ENCODE measurements at regions of chr12 and their contacts with region 1.

Region 1: DNA sequence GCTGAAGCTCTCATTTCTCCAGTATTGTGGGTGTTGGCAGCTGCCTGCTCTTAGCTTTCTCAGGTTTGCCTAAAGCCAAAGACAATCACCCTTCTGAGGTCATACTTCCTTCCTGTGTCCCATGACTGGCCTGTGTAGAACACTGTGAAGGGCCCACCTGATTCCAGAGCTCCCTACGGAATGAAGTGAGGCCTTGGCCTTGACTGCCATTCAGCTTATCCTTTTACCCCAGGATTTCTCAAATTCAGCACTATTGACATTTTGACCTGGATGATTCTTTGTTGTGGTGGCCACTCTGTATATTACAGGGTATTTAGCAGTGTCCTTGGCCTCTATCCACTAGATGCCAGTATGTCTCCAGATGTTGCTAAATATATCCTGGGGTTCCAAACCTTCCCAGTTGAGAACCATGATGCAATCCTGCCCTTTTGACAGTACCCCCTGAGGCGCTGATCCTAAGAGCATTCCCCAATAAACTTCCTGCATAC is 112.3 kb upstream of the KRR1 start:
- DNase-seq: peak; percentile 53
- H3K4me3 ChIP-seq: no peak overlapping the region
- H3K27ac ChIP-seq: peak overlapping the region; percentile 18
- H3K4me1 ChIP-seq: peaks cover 9% of the 10 kb centered on the region
- H3K27me3 ChIP-seq: no peaks in the 10 kb centered on the region
- CTCF ChIP-seq: peak; percentile 30 to 60

Region 2: GRCh38 chr12:75568393-75568792 is 55.3 kb before region 1 on chr12:
- CTCF ChIA-PET with region 1: no interaction called
- dilution Hi-C with region 1: loop called (anchors 5 kb)
- in situ Hi-C with region 1: no loop called
- intact Hi-C with region 1: no loop called
- DNase-seq: peak; percentile 57
- H3K4me3 ChIP-seq: no peak overlapping the region
- H3K27ac ChIP-seq: no peak overlapping the region
- H3K4me1 ChIP-seq: peaks cover 21% of the 10 kb centered on the region
- H3K27me3 ChIP-seq: no peaks in the 10 kb centered on the region
- CTCF ChIP-seq: no peak

Region 3: DNA sequence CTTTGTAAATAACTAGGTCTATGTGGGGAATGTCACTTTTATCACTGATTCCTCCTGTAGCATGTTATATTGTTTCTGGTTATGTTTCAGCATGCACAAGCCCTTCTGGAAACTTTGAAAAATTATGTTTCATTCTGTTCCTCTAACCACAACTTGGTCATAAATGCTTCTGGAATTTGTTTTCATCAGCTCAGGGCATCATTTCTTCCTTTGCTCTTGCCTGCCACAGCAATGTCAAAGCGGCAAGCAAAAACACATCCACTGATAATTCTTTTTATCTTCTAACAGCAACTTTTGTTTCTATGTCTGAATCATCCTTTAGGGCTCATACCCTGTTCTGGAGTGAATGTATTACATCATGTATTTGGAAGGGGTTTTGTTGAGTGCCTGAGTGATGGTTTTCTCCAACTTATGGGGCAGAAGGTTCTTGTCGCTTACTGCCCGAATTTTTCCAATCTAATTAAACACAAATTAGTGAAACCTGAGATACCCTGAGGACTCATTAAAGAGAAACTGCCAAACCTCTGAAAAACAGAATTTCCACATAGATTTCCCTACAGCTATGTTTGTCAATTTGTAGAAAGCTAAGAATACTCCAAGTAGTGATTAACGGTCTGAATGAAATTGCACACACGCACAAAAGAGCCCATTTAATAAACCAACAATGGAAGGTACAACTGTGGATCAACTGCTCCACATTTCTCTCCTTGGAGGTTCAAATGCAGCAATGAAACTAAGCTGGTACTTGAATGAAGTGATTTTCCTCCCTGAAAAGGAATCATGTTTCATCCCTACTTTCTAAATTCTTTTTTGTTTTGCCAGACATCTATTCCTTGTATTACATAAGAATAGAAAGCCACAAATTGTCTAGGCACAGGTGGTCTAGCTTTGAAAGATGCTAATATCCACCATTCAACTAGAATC is 61.3 kb after region 1 on chr12:
- CTCF ChIA-PET with region 1: no interaction called
- dilution Hi-C with region 1: no loop called
- in situ Hi-C with region 1: no loop called
- intact Hi-C with region 1: loop called (anchors 2 kb)
- DNase-seq: peak; percentile 97
- H3K4me3 ChIP-seq: no peak overlapping the region
- H3K27ac ChIP-seq: peak overlapping the region; percentile 92
- H3K4me1 ChIP-seq: peaks cover 25% of the 10 kb centered on the region
- H3K27me3 ChIP-seq: no peaks in the 10 kb centered on the region
- CTCF ChIP-seq: no peak

Region 4: DNA sequence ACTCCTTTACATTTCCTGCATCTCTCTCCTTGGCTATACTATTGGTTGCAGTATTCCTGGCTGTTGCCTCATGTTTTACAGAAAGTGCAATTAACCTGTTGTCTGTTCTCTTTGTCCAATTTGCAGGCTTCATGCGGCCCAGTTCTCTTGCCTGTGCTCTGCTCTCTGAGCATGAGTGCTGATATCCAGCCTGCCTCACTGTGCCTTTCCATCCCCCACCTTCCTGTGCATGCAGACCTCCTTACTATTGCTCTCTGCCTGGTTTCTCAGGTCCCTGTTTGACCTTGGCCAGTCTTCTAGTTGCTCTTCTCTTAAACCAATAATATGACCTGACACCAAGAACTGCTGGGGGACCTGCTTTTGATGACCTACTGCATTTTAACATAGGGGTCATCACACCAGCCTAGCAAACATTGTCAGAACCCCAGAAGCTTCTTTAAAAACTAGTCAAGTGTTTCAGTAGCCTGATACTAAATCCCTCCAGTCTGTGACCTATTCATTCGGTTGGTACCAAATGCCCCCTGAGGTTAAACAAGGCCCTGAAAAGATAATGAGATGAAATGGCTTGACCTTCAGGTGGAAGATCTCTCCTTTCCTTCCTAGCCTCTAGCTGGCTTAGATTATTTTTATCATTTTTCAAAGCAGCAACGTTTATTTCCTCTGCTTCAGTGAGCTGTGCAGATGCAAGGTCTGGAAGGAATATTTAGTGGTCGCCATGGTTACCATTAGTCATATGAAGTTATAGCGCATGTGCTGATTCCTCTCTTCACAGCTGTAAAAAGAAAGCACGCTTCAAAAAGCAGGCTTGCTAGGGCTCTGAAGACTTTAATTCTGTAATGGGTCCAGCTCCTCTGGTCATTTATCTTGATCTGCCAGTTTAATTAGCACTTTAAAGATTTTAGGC is 191.4 kb after region 1 on chr12:
- CTCF ChIA-PET with region 1: no interaction called
- dilution Hi-C with region 1: no loop called
- in situ Hi-C with region 1: no loop called
- intact Hi-C with region 1: loop called (anchors 2 kb)
- DNase-seq: peak; percentile 66
- H3K4me3 ChIP-seq: no peak overlapping the region
- H3K27ac ChIP-seq: peak overlapping the region; percentile 60
- H3K4me1 ChIP-seq: peaks cover 23% of the 10 kb centered on the region
- H3K27me3 ChIP-seq: no peaks in the 10 kb centered on the region
- CTCF ChIP-seq: no peak

Region 5: GRCh38 chr12:76470028-76470939 is 846.6 kb after region 1 on chr12:
- CTCF ChIA-PET with region 1: no interaction called
- dilution Hi-C with region 1: no loop called
- in situ Hi-C with region 1: no loop called
- intact Hi-C with region 1: no loop called
- DNase-seq: peak; percentile 79
- H3K4me3 ChIP-seq: no peak overlapping the region
- H3K27ac ChIP-seq: no peak overlapping the region
- H3K4me1 ChIP-seq: peaks cover 17% of the 10 kb centered on the region
- H3K27me3 ChIP-seq: no peaks in the 10 kb centered on the region
- CTCF ChIP-seq: no peak